K562 (cell line): ENCODE measurements at regions of chr3 and their contacts with region 1.

Region 1: DNA sequence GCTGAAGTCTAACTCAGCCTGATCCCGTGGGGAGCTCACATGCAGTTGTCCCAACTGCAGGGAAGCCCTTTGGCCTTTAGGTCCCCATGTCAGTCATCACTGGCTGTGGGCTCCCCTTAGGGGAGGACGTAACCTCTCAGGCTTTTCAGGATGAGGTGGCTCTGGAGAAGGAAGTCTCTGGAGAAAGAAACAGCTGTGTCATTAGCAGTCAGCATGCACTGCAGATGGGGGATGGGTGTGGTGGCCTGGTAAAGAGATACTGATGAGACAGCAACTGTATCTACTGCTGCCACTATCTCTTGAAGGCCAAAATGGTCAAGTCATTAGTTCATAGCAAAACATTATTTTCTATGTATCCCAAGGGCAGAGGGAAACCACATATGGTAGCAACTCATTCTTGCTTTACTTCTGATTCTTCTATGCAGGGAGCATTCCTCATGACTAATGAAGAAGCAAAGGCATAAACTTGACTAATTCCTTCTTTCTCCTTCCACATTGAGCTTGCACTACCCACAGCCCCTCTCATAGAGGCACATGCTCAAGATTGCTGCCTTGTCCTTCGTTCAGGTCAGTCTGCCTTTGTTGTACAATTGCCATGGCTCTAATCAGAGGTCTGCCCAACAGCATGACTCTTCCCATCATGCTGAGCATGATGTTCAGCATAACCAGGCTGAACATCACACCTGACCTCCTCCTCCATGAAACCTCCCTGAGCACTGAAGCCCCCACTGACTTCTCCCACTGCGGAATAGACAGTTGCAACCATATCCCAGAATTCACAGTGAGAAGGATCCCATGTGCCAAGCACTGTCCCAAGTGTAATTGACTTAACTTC is 47.8 kb upstream of the TMEM158 start:
- DNase-seq: peak; percentile 79 to 96 (median 84)
- ATAC-seq: peak; percentile 93
- H3K4me3 ChIP-seq: no peak overlapping the region
- H3K27ac ChIP-seq: peak overlapping the region; percentile 93
- H3K4me1 ChIP-seq: peaks cover 25 to 50% of the 10 kb centered on the region in 2 experiments
- H3K27me3 ChIP-seq: no peaks in the 10 kb centered on the region
- CTCF ChIP-seq: peak in 1 of 3 experiments; percentile 9; a peak in 1 of 6 replicates
- EP300 ChIP-seq: peak; percentile 96
- POLR2A ChIP-seq: peak; percentile 68; the same call in 1 of the 2 replicates
- RAD21 ChIP-seq: peak; percentile 6 to 40; a peak in 2 of 4 replicates

Region 2: DNA sequence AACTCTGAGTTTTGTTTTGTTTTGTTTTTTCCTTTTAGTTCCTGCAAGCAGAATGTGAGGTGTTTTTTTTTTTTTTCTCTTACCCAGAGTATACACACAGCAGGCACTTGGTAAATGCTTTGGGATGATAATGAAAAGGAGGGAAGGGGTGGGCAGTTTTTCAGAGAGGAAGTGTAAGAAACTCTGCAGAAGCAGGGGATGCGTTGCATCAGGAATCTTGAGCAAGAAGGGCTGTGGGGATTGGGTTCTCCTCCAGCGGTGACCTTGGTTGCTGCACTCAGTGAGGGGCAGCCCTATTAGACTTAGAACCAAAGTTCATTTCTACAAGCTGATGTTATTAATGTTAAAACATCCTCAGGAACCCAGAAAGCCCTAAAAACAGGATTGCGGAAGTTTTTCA is 15.6 kb before region 1 on chr3:
- CTCF ChIA-PET with region 1: no interaction called
- POLR2A ChIA-PET with region 1: interaction called, 22 read pairs
- in situ Hi-C with region 1: no loop called
- intact Hi-C with region 1: no loop called
- DNase-seq: no peak
- ATAC-seq: peak; percentile 48; the same call in 2 of the 3 replicates
- H3K4me3 ChIP-seq: no peak overlapping the region
- H3K27ac ChIP-seq: no peak overlapping the region
- H3K4me1 ChIP-seq: no peaks in the 10 kb centered on the region
- H3K27me3 ChIP-seq: no peaks in the 10 kb centered on the region
- CTCF ChIP-seq: no peak
- EP300 ChIP-seq: no peak
- POLR2A ChIP-seq: no peak
- RAD21 ChIP-seq: no peak